ENCODE measurements at regions of chr1 and their contacts with region 1.

Region 1: GRCh38 chr1:36306902-36307456 is 811 bp downstream of the SH3D21 start:
- DNase-seq: peak; percentile 72
- ATAC-seq: peak; percentile 93
- H3K4me3 ChIP-seq: peak overlapping the region; percentile 60 to 67
- H3K27ac ChIP-seq: peak overlapping the region; percentile 81
- H3K4me1 ChIP-seq: peaks cover 4 to 23% of the 10 kb centered on the region in 2 experiments; a peak in 1 of 4 replicates
- H3K27me3 ChIP-seq: no peaks in the 10 kb centered on the region
- CTCF ChIP-seq: no peak
- POLR2A ChIP-seq: peak; percentile 94
- RAD21 ChIP-seq: no peak

Region 2: DNA sequence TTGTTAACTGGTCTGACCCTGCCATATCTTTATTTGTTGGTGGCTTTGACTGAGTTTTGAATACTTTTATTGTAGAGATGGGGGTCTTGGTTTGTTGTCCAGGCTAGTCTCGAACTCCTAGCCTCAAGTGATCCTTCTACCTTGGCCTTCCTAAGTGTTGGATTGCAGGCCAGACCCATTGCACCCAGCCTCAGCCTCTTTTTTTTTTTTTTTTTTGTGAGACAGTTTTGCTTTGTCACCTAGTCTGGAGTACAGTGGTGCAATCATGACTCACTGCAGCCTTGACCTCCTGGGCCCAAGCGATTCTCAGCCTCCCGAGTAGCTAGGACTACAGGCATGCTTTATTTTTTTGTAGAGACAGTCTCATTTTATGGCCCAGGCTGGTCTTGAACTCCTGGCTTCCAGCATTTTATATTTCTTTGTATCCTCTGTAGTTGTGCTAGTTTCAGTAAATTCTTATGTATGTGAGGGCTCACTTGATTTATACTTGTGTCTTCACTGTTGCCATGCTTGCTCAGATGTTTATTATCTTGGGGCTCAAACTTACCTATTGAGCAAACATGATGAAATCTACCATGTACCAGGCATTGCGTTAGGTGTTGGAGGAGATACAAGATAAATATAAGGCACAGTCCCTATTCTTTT is 58.6 kb before region 1 on chr1:
- CTCF ChIA-PET with region 1: no interaction called
- POLR2A ChIA-PET with region 1: no interaction called
- RAD21 ChIA-PET with region 1: no interaction called
- intact Hi-C with region 1: no loop called
- DNase-seq: peak; percentile 75
- ATAC-seq: peak; percentile 82
- H3K4me3 ChIP-seq: no peak overlapping the region; a peak in 1 of 4 replicates
- H3K27ac ChIP-seq: peak overlapping the region; percentile 58
- H3K4me1 ChIP-seq: peaks cover 29 to 56% of the 10 kb centered on the region in 2 experiments
- H3K27me3 ChIP-seq: no peaks in the 10 kb centered on the region
- CTCF ChIP-seq: no peak
- POLR2A ChIP-seq: no peak
- RAD21 ChIP-seq: no peak

Region 3: DNA sequence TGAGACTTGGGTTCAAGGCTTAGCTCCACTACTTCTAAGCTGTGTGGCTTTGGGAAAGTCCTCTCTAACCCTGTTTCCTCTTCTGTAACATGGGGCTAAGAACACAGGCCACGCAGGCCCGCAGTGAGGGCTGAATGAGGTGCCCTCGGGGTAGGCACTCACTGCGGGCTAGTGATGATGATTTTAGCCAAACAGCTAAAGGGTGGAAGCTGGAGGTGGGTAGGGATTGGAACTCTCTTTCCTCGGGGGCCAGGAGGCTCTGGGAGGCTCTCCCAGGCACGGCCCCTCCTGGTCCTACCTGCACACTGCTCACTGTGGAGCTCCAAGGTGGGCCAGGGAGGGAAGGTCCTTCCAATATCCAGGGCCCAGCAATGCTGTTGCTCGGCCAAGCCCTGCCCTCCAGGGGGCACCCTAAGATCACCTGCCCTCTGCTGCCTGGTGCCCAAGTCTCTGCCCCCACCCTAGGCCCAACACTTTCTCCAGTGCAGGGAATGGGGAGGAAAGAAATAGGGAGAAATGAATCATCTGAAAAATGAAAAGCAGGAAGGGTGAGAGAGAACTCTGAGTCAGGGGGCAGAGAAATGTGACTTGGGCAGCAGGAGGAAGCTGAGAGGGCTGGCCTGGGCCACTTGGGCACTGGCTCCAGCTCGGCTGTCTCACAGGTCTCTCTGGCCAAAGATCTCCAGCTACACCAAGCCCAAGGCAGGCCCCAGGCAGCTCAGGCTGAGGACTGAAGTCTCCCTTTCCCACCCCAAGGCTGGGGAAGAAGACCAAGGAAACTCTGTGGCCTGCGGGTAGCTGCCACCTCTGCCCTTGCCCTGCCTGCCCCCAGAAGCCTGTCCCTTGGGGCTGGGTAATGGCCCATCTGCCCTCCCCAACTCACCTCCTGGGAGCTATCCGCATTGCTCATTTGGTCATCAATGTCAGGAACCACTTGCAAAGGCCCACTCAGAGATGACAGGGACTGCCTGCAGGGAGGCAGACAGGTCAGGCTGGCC is 35.8 kb after region 1 on chr1:
- CTCF ChIA-PET with region 1: no interaction called
- POLR2A ChIA-PET with region 1: no interaction called
- RAD21 ChIA-PET with region 1: no interaction called
- intact Hi-C with region 1: no loop called
- DNase-seq: no peak
- ATAC-seq: peak; percentile 90
- H3K4me3 ChIP-seq: no peak overlapping the region
- H3K27ac ChIP-seq: 0 out of 2 replicates have a peak overlapping the region, but pooled peaks have one; percentile 11
- H3K4me1 ChIP-seq: peaks cover 0 to 6% of the 10 kb centered on the region in 2 experiments; a peak in 1 of 4 replicates
- H3K27me3 ChIP-seq: no peaks in the 10 kb centered on the region
- CTCF ChIP-seq: peak; percentile 75 to 87 (median 83)
- POLR2A ChIP-seq: no peak
- RAD21 ChIP-seq: peak; percentile 97

Region 4: DNA sequence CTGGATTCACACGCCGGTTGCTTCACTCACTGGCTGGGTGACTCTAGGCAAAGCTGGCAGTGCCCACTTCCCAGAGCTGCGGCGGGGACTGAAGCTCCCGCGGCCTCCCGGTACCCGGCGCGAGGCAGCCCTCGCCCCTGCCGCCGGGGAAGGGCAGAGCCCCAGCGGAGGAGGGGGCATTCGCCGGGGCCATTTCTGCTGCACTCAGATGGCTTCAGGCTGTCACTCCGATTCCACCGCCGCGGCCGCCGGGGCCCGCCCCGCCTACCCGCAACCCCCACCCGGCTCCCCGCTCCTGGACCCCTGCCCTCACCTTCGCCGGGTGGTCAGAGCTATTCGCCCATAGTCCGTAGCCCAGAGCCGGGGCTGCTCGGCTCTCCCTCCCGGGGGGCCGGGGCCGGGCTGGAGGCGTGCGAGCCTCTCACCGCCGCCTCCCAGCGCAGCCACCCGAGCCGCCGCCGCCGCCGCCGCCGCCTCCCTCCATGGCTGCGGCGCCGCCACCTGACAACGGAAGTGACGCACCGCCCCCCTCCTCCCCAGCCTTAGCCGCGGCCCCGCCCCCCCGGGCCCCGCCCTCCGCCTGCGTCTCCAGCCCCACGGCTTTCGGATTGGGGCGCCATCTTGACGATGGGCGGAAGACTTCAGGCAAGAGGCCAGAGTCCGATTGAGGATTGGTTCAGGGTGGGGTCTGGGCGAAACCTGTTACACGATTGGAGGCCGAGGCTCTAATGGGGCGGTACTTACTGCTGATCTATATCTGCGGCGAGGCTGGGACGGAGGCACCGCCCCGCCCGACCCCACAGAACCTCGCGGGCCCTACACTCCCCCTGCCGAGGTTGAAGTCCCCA is 78.7 kb after region 1 on chr1 and contains the start of gene STK40:
- CTCF ChIA-PET with region 1: no interaction called
- POLR2A ChIA-PET with region 1: interaction called, 12 read pairs
- RAD21 ChIA-PET with region 1: no interaction called
- intact Hi-C with region 1: no loop called
- DNase-seq: peak; percentile 99
- ATAC-seq: peak; percentile 87
- H3K4me3 ChIP-seq: peak within 1 kb of the TSS; percentile 87 to 96
- H3K27ac ChIP-seq: peak within 1 kb of the TSS; percentile 89
- H3K4me1 ChIP-seq: peaks cover 16 to 32% of the 10 kb centered on the region in 2 experiments
- H3K27me3 ChIP-seq: no peaks in the 10 kb centered on the region
- CTCF ChIP-seq: no peak
- POLR2A ChIP-seq: no peak
- RAD21 ChIP-seq: no peak
- total RNA-seq, gene STK40: 33.9 TPM

Region 5: GRCh38 chr1:36553591-36554322 is 246.8 kb after region 1 on chr1:
- CTCF ChIA-PET with region 1: no interaction called
- POLR2A ChIA-PET with region 1: no interaction called
- RAD21 ChIA-PET with region 1: no interaction called
- intact Hi-C with region 1: no loop called
- DNase-seq: peak; percentile 60
- ATAC-seq: peak; percentile 100
- H3K4me3 ChIP-seq: no peak overlapping the region
- H3K27ac ChIP-seq: no peak overlapping the region
- H3K4me1 ChIP-seq: 0 out of 4 replicates have a peak, but pooled peaks cover 0 to 3% of the 10 kb centered on the region in 2 experiments
- H3K27me3 ChIP-seq: peaks cover 49% of the 10 kb centered on the region
- CTCF ChIP-seq: peak; percentile 80 to 91 (median 83)
- POLR2A ChIP-seq: no peak
- RAD21 ChIP-seq: peak; percentile 88

Measured in HCT116 (cell line).